CD8-positive, alpha-beta T cell (primary cell): ENCODE measurements at regions of chr16 and their contacts with region 1.

Region 1: GRCh38 chr16:72664509-72665225 is 383.3 kb downstream of the ZFHX3 start:
- DNase-seq: peak; percentile 87 to 98 (median 93)
- ATAC-seq: peak; percentile 98
- H3K4me3 ChIP-seq: peak overlapping the region; percentile 81 to 93
- H3K4me3 Mint-ChIP-seq: peak overlapping the region; percentile 100
- H3K27ac ChIP-seq: peak overlapping the region; percentile 59 to 77
- H3K27ac Mint-ChIP-seq: peak overlapping the region; percentile 98
- H3K4me1 ChIP-seq: peaks cover 14% of the 10 kb centered on the region
- H3K4me1 Mint-ChIP-seq: peaks cover 24% of the 10 kb centered on the region
- H3K27me3 ChIP-seq: no peaks in the 10 kb centered on the region
- H3K27me3 Mint-ChIP-seq: no peaks in the 10 kb centered on the region
- CTCF ChIP-seq: no peak

Region 2: DNA sequence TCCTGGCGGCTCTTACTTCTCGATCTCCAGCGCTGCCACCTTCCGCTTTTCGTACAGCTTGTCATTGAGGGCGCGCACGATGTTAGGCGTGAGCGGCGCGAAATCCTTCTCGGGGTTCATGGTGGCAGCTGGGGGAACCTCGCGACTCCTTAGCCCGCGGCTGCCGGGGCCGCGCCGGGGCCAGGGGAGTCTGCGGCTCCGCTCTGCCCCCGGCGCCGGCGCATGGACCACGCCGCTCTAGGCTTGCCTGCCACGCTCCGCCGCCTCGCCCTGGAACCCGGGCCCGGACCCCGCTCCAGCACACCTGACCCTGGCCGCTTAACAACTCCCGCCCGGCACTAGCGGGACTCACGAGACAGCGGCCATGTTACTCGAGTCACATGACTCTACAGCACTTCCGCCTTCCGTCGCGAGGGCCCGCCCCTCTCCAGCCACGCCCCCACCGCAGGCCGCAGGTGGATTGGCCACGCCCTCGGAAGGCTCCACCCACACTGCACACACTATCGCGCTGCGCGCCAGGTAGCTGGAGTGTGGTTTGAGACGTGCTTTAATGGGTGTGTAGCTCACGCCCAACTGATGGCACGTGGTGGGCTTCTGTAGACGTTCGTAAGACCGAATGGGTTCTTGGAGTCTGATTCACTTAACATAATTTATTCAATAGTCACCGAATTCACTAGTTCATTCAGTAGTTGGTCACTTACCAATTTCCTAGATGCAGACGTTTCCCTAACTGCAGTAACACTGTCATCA is 1863.7 kb before region 1 on chr16 and contains the start of gene VAC14:
- CTCF ChIA-PET with region 1: no interaction called
- POLR2A ChIA-PET with region 1: no interaction called
- intact Hi-C with region 1: loop called in 1 of 2 experiments (anchors 5 kb)
- DNase-seq: peak; percentile 95 to 99 (median 97)
- ATAC-seq: peak; percentile 99
- H3K4me3 ChIP-seq: peak within 1 kb of the TSS; percentile 63 to 65
- H3K4me3 Mint-ChIP-seq: peak within 1 kb of the TSS; percentile 95
- H3K27ac ChIP-seq: peak within 1 kb of the TSS; percentile 52 to 57
- H3K27ac Mint-ChIP-seq: peak within 1 kb of the TSS; percentile 97
- H3K4me1 ChIP-seq: peaks cover 12% of the 10 kb centered on the region
- H3K4me1 Mint-ChIP-seq: peaks cover 39% of the 10 kb centered on the region
- H3K27me3 ChIP-seq: no peaks in the 10 kb centered on the region
- H3K27me3 Mint-ChIP-seq: no peaks in the 10 kb centered on the region
- CTCF ChIP-seq: no peak
- total RNA-seq, gene VAC14: 27.1 to 27.2 TPM

Region 3: GRCh38 chr16:72787514-72788268 is 123.0 kb after region 1 on chr16:
- CTCF ChIA-PET with region 1: no interaction called
- POLR2A ChIA-PET with region 1: interaction called, 3 read pairs
- intact Hi-C with region 1: loop called (anchors 2 kb)
- DNase-seq: peak; percentile 31 to 83 (median 65)
- ATAC-seq: peak; percentile 89
- H3K4me3 ChIP-seq: peak overlapping the region; percentile 53 to 79
- H3K4me3 Mint-ChIP-seq: peak overlapping the region; percentile 91
- H3K27ac ChIP-seq: no peak overlapping the region
- H3K27ac Mint-ChIP-seq: peak overlapping the region; percentile 92
- H3K4me1 ChIP-seq: peaks cover 9% of the 10 kb centered on the region
- H3K4me1 Mint-ChIP-seq: peaks cover 20% of the 10 kb centered on the region
- H3K27me3 ChIP-seq: no peaks in the 10 kb centered on the region
- H3K27me3 Mint-ChIP-seq: peaks cover 10% of the 10 kb centered on the region
- CTCF ChIP-seq: no peak

Region 4: GRCh38 chr16:73949574-73950320 is 1285.1 kb after region 1 on chr16:
- CTCF ChIA-PET with region 1: no interaction called
- POLR2A ChIA-PET with region 1: no interaction called
- intact Hi-C with region 1: loop called in 1 of 2 experiments (anchors 5 kb)
- DNase-seq: no peak
- ATAC-seq: no peak
- H3K4me3 ChIP-seq: no peak overlapping the region
- H3K4me3 Mint-ChIP-seq: no peak overlapping the region
- H3K27ac ChIP-seq: no peak overlapping the region
- H3K27ac Mint-ChIP-seq: no peak overlapping the region
- H3K4me1 ChIP-seq: no peaks in the 10 kb centered on the region
- H3K4me1 Mint-ChIP-seq: no peaks in the 10 kb centered on the region
- H3K27me3 ChIP-seq: no peaks in the 10 kb centered on the region
- H3K27me3 Mint-ChIP-seq: peaks cover 2% of the 10 kb centered on the region
- CTCF ChIP-seq: no peak

Region 5: DNA sequence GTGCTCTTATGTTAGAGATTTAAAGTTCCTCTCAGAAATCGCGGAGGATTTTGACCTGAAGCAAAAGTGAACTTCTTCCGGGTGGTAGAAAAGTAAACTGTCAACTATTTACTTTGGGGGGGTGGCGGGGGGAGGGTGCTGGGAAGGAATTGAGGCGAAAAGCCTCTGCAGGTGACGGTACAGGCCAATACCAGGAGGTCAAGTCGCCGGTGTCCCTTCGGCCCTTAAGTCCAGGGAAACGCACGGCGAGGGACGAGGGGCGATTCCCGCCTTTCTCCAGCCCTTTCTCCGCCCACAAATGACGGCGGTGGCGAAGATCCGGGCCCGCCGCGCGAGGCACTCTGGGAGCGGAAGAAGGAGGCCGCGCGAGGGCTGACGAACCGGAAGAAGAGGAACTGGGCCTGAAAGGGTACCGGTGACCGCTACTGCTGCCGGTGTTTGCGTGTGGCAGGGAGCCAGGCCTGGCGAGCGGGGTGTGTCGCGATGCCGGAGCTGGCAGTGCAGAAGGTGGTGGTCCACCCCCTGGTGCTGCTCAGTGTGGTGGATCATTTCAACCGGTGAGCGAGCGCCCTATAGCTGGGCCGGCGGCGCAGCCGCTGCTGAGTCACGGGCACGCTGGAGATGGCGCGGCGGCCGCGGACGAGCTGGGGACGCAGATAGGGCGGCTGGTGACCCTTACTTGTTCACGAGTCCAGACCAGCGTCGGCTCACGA is 1631.9 kb after region 1 on chr16 and contains the start of gene PSMD7:
- CTCF ChIA-PET with region 1: no interaction called
- POLR2A ChIA-PET with region 1: no interaction called
- intact Hi-C with region 1: loop called (anchors 5 kb)
- DNase-seq: peak; percentile 77 to 93 (median 89)
- ATAC-seq: peak; percentile 86
- H3K4me3 ChIP-seq: peak within 1 kb of the TSS; percentile 83 to 95
- H3K4me3 Mint-ChIP-seq: peak within 1 kb of the TSS; percentile 95
- H3K27ac ChIP-seq: peak within 1 kb of the TSS; percentile 87 to 97
- H3K27ac Mint-ChIP-seq: peak within 1 kb of the TSS; percentile 99
- H3K4me1 ChIP-seq: peaks cover 25% of the 10 kb centered on the region
- H3K4me1 Mint-ChIP-seq: peaks cover 47% of the 10 kb centered on the region
- H3K27me3 ChIP-seq: no peaks in the 10 kb centered on the region
- H3K27me3 Mint-ChIP-seq: no peaks in the 10 kb centered on the region
- CTCF ChIP-seq: no peak
- total RNA-seq, gene PSMD7: 136 to 137 TPM